Ovary (tissue), 10 donors: ENCODE measurements at regions of chr5 and their contacts with region 1.

Region 1: GRCh38 chr5:151223469-151224264 is at the start of gene CCDC69:
- DNase-seq: peak; percentile 76 to 85 (median 79)
- H3K4me3 ChIP-seq: peak within 1 kb of the TSS; percentile 73
- H3K27ac ChIP-seq: peak within 1 kb of the TSS; percentile 6 to 64
- H3K4me1 ChIP-seq: peaks cover 14% of the 10 kb centered on the region
- H3K27me3 ChIP-seq: no peaks in the 10 kb centered on the region
- CTCF ChIP-seq: no peak
- EP300 ChIP-seq: no peak
- POLR2A ChIP-seq: peak; percentile 89
- total RNA-seq, gene CCDC69: 22.6 to 60.1 (median 37.3) TPM

Region 2: GRCh38 chr5:151191659-151192058 is 32.0 kb before region 1 on chr5:
- intact Hi-C with region 1: loop called in 1 of 4 experiments (anchors 2 kb)
- DNase-seq: no peak
- H3K4me3 ChIP-seq: no peak overlapping the region
- H3K27ac ChIP-seq: no peak overlapping the region
- H3K4me1 ChIP-seq: no peaks in the 10 kb centered on the region
- H3K27me3 ChIP-seq: no peaks in the 10 kb centered on the region
- CTCF ChIP-seq: no peak
- EP300 ChIP-seq: no peak
- POLR2A ChIP-seq: no peak

Region 3: GRCh38 chr5:151240924-151241635 is 17.4 kb after region 1 on chr5:
- intact Hi-C with region 1: no loop called
- DNase-seq: no peak
- H3K4me3 ChIP-seq: no peak overlapping the region
- H3K27ac ChIP-seq: no peak overlapping the region
- H3K4me1 ChIP-seq: peaks cover 3% of the 10 kb centered on the region
- H3K27me3 ChIP-seq: no peaks in the 10 kb centered on the region
- CTCF ChIP-seq: no peak
- EP300 ChIP-seq: no peak
- POLR2A ChIP-seq: no peak